ENCODE measurements at regions of chr3 and their contacts with region 1.

Region 1: GRCh38 chr3:193190146-193190786 is 50.8 kb upstream of the PLAAT1 start:
- H3K4me3 Mint-ChIP-seq: no peak overlapping the region
- H3K27ac Mint-ChIP-seq: no peak overlapping the region
- H3K4me1 Mint-ChIP-seq: no peaks in the 10 kb centered on the region
- H3K27me3 Mint-ChIP-seq: no peaks in the 10 kb centered on the region

Region 2: GRCh38 chr3:193225302-193226155 is 35.3 kb after region 1 on chr3:
- intact Hi-C with region 1: no loop called
- H3K4me3 Mint-ChIP-seq: no peak overlapping the region
- H3K27ac Mint-ChIP-seq: no peak overlapping the region
- H3K4me1 Mint-ChIP-seq: no peaks in the 10 kb centered on the region
- H3K27me3 Mint-ChIP-seq: peaks cover 1% of the 10 kb centered on the region

Region 3: GRCh38 chr3:193452338-193452737 is 262.1 kb after region 1 on chr3:
- intact Hi-C with region 1: loop called (anchors 5 kb)
- H3K4me3 Mint-ChIP-seq: no peak overlapping the region
- H3K27ac Mint-ChIP-seq: no peak overlapping the region
- H3K4me1 Mint-ChIP-seq: peaks cover 30% of the 10 kb centered on the region
- H3K27me3 Mint-ChIP-seq: peaks cover 1% of the 10 kb centered on the region

Measured in dendritic cell treated with granulocyte-macrophage colony-stimulating factor and Interleukin-4, amounts not matched to agents 40 ng/mL and 50 ng/mL, for 4 days (primary cell).